Pancreas (tissue), 10 donors: ENCODE measurements at regions of chr11 and their contacts with region 1.

Region 1: DNA sequence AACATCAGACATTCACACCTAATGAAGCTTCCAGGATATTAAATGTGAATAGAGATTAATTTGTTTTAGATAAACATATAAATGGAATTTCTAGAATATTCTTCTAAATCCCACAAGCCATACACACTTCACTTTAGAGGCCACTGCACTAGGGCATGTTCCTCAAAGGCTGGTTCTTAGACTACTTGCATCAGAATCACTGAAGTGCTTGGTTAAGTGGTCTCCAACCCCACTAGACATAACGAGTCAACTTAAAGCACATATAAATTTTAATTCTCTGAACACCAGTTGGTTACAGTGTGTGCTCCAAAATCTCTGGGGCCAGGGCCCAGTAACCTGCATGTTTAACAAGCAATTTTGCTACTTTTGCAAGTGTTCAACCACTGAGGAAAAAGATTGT is 7.9 kb upstream of the ALKBH8 start:
- DNase-seq: no peak
- ATAC-seq: no peak
- H3K4me3 ChIP-seq: no peak overlapping the region
- H3K27ac ChIP-seq: no peak overlapping the region
- H3K4me1 ChIP-seq: no peaks in the 10 kb centered on the region
- H3K27me3 ChIP-seq: no peaks in the 10 kb centered on the region
- CTCF ChIP-seq: no peak

Region 2: GRCh38 chr11:107232451-107232850 is 341.0 kb before region 1 on chr11:
- intact Hi-C with region 1: no loop called
- DNase-seq: no peak
- ATAC-seq: no peak
- H3K4me3 ChIP-seq: no peak overlapping the region
- H3K27ac ChIP-seq: no peak overlapping the region
- H3K4me1 ChIP-seq: no peaks in the 10 kb centered on the region
- H3K27me3 ChIP-seq: no peaks in the 10 kb centered on the region
- CTCF ChIP-seq: no peak

Region 3: DNA sequence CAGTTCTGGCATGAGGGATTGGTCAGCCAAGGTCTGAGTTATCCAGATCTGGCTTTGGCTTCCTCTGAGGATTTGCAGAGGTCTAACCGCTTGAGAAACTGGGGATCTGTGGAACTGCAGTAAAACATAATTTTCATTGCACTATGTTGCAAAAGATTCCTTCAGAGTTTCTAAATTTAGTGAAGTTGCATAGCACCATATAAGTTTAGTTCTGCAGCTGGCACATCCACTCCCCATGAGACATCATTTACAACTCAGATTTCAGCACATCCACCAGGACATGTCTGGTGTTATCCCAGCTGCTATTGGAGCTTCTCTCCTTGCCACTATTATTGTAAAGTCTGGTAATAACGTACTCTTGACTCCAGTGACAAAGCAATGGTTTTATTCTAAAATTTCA is 297.4 kb before region 1 on chr11:
- intact Hi-C with region 1: no loop called
- DNase-seq: no peak
- ATAC-seq: no peak
- H3K4me3 ChIP-seq: no peak overlapping the region
- H3K27ac ChIP-seq: no peak overlapping the region
- H3K4me1 ChIP-seq: no peaks in the 10 kb centered on the region
- H3K27me3 ChIP-seq: no peaks in the 10 kb centered on the region
- CTCF ChIP-seq: no peak

Region 4: GRCh38 chr11:107676336-107677057 is 103.1 kb after region 1 on chr11:
- intact Hi-C with region 1: loop called in 1 of 3 experiments (anchors 10 kb)
- DNase-seq: no peak
- ATAC-seq: no peak
- H3K4me3 ChIP-seq: no peak overlapping the region
- H3K27ac ChIP-seq: no peak overlapping the region
- H3K4me1 ChIP-seq: no peaks in the 10 kb centered on the region
- H3K27me3 ChIP-seq: no peaks in the 10 kb centered on the region
- CTCF ChIP-seq: no peak

Region 5: GRCh38 chr11:107689317-107690202 is 116.1 kb after region 1 on chr11:
- intact Hi-C with region 1: loop called in 2 of 3 experiments (anchors 5 kb)
- DNase-seq: peak in 5 of 6 donors; percentile 49 to 75 (median 62)
- ATAC-seq: peak; percentile 96 to 99 (median 98)
- H3K4me3 ChIP-seq: no peak overlapping the region
- H3K27ac ChIP-seq: no peak overlapping the region
- H3K4me1 ChIP-seq: peaks cover 0 to 2% (median 0%) of the 10 kb centered on the region in 3 donors
- H3K27me3 ChIP-seq: peaks cover 0 to 6% (median 0%) of the 10 kb centered on the region in 4 donors
- CTCF ChIP-seq: peak in 3 of 4 donors; percentile 43 to 60 (median 47)